ENCODE measurements at regions of chr17 and their contacts with region 1.

Region 1: GRCh38 chr17:57861000-57861789 is 11.4 kb upstream of the MRPS23 start:
- DNase-seq: peak; percentile 70
- H3K4me3 ChIP-seq: peak overlapping the region in 1 of 2 experiments; percentile 28; a peak in 1 of 4 replicates
- H3K27ac ChIP-seq: no peak overlapping the region; a peak in 1 of 4 replicates
- H3K4me1 ChIP-seq: peaks cover 14 to 22% of the 10 kb centered on the region in 2 experiments; a peak in 3 of 4 replicates
- H3K27me3 ChIP-seq: no peaks in the 10 kb centered on the region
- CTCF ChIP-seq: no peak
- EP300 ChIP-seq: no peak
- RAD21 ChIP-seq: no peak

Region 2: GRCh38 chr17:57838857-57839570 is 22.2 kb before region 1 on chr17:
- CTCF ChIA-PET with region 1: interaction called, 11 read pairs
- POLR2A ChIA-PET with region 1: no interaction called
- DNase-seq: no peak
- H3K4me3 ChIP-seq: no peak overlapping the region
- H3K27ac ChIP-seq: no peak overlapping the region
- H3K4me1 ChIP-seq: peaks cover 0 to under 1% of the 10 kb centered on the region in 2 experiments; a peak in 1 of 4 replicates
- H3K27me3 ChIP-seq: no peaks in the 10 kb centered on the region
- CTCF ChIP-seq: no peak
- EP300 ChIP-seq: no peak
- RAD21 ChIP-seq: no peak

Region 3: DNA sequence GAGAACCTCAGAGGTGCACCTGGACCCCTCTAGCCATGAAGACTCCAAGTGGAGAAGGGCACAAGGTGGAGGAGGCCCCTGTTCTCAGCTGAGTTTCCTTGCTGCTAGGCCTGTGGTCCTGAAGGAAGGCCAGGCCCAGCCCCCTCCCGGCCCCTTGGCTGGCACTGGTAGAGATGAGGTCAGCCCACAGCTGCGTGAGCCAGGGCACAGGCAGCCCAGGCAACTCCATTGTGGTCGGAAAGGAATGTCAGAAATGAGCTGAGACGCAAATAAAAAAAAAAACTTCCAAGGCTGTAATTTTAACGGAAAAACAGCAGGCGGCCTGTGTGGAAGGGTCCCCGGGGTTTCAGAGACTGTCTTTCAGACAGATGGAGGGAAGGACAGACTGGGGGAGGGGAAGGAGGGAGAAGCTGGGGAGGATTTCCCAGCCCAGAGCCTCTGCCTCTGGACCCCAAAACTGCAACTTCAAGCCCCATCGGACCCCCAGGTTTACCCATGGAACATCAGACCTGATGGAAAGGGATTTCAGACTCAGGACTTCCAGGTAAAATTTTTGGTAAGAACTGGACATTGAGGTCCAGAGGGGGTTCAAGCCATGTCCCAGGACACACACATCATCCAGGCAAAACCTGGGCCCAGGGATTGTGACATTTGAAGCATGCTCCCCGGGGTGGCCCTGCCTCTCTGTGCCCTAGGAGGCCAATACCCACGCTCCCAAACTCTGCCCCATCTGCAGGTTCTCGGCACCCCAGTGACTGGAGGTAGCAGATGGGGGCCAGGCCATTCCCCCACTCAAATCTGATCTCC is 14.3 kb after region 1 on chr17:
- CTCF ChIA-PET with region 1: interaction called, 171 read pairs
- POLR2A ChIA-PET with region 1: no interaction called
- DNase-seq: peak; percentile 70
- H3K4me3 ChIP-seq: peak overlapping the region in 1 of 2 experiments; percentile 51; a peak in 2 of 4 replicates
- H3K27ac ChIP-seq: peak overlapping the region; percentile 87 to 100
- H3K4me1 ChIP-seq: peaks cover 36 to 67% of the 10 kb centered on the region in 2 experiments
- H3K27me3 ChIP-seq: no peaks in the 10 kb centered on the region
- CTCF ChIP-seq: peak; percentile 80
- EP300 ChIP-seq: peak; percentile 60 to 99
- RAD21 ChIP-seq: peak; percentile 55

Region 4: DNA sequence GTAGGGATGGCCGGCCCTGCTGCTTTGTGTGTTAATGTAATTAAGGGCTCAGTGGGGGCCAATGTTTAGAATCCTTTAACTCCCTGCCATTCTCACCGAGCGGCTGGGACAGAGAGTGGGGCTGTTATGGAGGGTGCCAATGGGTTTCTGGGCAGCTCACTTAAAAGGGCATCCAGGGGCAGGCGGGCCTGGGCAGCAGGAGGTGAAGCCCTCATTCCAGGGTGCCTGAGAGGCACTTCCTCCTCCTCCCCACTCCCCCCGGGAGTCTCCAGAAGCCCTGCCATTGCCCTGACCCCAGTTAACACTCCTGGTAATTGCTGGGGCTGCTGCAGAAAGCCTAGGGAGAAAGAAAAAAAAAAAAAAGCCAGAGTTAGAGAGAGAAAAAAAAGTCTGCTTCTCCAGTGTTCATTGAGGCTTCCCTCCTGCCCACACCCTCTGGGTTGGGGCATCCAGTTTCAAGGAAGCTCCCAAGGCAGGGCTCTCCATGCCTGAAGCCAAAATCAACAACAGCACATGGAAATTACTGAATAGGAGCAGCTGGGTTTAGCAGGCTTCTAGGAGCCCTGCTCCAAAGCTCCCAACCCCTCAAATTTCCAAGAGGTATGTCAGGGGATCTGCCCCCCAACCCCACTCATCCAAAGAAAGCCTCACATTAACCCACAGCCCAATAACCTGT is 66.0 kb after region 1 on chr17:
- CTCF ChIA-PET with region 1: interaction called, 25 read pairs
- POLR2A ChIA-PET with region 1: no interaction called
- DNase-seq: peak; percentile 45
- H3K4me3 ChIP-seq: no peak overlapping the region
- H3K27ac ChIP-seq: peak overlapping the region; percentile 7 to 47; a peak in 1 of 4 replicates
- H3K4me1 ChIP-seq: peaks cover 22 to 24% of the 10 kb centered on the region in 2 experiments; a peak in 3 of 4 replicates
- H3K27me3 ChIP-seq: no peaks in the 10 kb centered on the region
- CTCF ChIP-seq: no peak
- EP300 ChIP-seq: no peak
- RAD21 ChIP-seq: no peak

Region 5: GRCh38 chr17:57955183-57955931 is 94.2 kb after region 1 on chr17 and contains the start of gene CUEDC1:
- CTCF ChIA-PET with region 1: interaction called, 23 read pairs
- POLR2A ChIA-PET with region 1: interaction called, 4 read pairs
- DNase-seq: peak; percentile 98
- H3K4me3 ChIP-seq: peak within 1 kb of the TSS; percentile 67 to 92
- H3K27ac ChIP-seq: peak within 1 kb of the TSS; percentile 71 to 79
- H3K4me1 ChIP-seq: peaks cover 26 to 41% of the 10 kb centered on the region in 2 experiments; a peak in 3 of 4 replicates
- H3K27me3 ChIP-seq: no peaks in the 10 kb centered on the region
- CTCF ChIP-seq: no peak
- EP300 ChIP-seq: peak in 1 of 2 experiments; percentile 43; a peak in 1 of 4 replicates
- RAD21 ChIP-seq: peak; percentile 17; the same call in 1 of the 2 replicates
- polyA plus RNA-seq, gene CUEDC1: 50.3 and 58.9 TPM in 2 replicates

Region 6: DNA sequence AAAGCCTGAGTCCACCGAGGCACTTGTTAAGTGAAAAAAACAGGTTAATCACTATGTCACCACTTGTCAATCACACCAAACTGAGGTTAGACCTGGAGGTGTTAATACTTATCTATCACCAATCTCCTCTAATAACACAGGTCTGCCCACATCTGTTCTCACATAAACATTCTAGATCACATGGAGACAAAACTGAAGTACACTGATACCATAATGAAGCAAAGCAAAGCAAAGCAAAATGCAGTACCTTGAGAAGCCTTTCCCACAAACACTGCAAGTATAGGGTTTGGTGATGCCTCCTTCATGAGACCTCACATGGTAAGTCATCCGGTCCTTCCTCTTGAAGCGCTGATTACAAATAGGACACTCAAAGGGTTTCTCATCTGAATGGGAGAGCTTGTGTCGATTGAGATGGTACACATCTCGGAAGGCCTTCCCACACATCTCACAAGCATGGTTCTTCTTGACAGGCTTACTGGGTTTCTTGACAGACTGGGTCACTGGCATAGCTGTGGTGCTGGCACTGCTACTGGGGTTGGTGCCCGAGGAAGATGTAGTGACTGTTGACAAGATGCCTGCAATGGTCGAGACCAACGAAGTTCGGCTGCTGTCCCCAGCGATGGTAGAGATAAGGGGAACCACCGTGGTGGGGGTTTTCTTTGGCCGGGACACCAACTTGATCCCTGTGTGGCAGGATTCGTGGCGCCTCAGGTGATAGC is 121.4 kb after region 1 on chr17:
- CTCF ChIA-PET with region 1: interaction called, 29 read pairs
- POLR2A ChIA-PET with region 1: interaction called, 3 read pairs
- DNase-seq: no peak
- H3K4me3 ChIP-seq: no peak overlapping the region
- H3K27ac ChIP-seq: no peak overlapping the region
- H3K4me1 ChIP-seq: peaks cover 17 to 43% of the 10 kb centered on the region in 2 experiments
- H3K27me3 ChIP-seq: no peaks in the 10 kb centered on the region
- CTCF ChIP-seq: no peak
- EP300 ChIP-seq: no peak
- RAD21 ChIP-seq: no peak

Region 7: DNA sequence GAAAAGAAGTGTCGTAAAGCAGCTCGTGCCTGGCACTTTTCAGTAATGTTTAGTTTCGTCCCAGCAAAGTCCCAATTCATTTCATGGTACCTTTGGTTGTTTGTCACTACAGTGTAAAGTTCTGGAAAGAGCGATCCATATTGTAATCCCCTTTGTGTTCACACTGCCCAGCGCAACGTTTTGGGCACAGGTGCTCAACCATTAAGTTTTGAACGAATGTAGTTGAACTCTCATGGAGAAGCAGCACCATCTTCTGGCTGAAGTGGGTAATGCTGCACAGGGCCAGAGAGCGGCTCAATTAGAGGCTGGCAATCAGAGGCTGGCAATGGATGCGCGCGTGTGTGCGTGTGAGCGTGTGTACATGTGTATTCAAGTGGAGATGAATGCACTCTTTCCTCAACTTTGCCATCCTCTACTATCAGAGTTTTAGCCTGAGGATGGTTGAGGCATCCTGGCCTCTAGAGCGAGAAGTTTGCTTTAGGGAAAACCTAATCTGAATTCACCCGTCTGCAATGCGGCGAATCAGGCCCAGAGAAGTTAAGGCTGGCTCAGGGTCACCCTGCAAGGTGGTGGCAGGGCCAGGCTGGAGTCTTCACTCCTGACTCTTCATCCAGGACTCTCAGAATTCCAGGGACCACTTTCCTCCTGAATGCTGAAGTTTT is 251.9 kb after region 1 on chr17:
- CTCF ChIA-PET with region 1: interaction called, 118 read pairs
- POLR2A ChIA-PET with region 1: interaction called, 3 read pairs
- DNase-seq: peak; percentile 79
- H3K4me3 ChIP-seq: no peak overlapping the region
- H3K27ac ChIP-seq: no peak overlapping the region
- H3K4me1 ChIP-seq: no peaks in the 10 kb centered on the region
- H3K27me3 ChIP-seq: 0 out of 2 replicates have a peak, but pooled peaks cover 18% of the 10 kb centered on the region
- CTCF ChIP-seq: peak; percentile 99
- EP300 ChIP-seq: no peak
- RAD21 ChIP-seq: peak; percentile 99